CD8-positive, alpha-beta T cell (primary cell): ENCODE measurements at regions of chr6 and their contacts with region 1.

Region 1: DNA sequence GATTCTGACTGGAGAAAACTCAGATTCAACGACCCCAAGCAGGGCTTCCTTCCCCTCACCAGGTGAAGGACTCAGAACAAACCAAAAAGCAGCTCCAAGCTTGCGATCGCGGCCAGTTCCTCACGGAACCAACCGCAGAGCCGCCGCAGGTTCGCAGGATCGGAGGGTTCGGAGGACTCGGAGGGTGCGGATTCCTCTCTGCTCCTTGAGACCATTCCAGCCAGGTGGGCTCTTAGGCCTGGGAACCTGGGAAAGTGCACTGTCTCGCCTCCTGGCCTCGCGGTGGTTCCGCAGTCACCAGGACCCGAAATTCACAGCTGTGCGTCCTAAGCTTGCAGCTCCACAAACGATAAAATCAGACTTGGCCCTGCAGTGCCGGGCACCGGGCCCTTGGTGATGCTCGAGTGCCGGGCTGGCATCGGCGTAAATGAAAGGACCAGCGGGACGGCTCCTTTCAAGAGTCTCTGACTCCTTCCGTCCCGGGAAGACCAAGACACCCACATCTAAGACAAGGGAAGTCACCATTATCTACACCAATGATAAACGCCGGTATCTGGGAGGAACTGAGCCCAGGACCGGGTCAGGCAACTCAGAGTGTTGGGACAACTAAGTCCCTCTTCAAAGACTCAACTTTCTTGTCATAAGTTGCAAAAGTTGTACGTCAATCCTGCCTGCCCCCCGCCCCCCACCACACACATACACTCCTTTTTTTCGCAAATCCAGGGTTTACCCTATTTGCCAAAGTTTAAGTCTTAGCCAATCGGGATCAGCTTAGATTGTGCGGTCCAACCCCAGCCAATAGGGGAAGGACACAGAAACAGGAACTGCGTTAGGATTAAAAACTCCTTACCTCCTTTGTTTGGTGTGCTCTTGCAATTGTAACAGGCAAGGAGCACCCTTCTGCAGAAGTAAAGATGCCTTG is 69.8 kb upstream of the PRSS16 start:
- DNase-seq: peak; percentile 46 to 89 (median 72)
- ATAC-seq: peak; percentile 69
- H3K4me3 ChIP-seq: peak overlapping the region; percentile 95 to 100
- H3K4me3 Mint-ChIP-seq: peak overlapping the region; percentile 93
- H3K27ac ChIP-seq: peak overlapping the region; percentile 48 to 68
- H3K27ac Mint-ChIP-seq: peak overlapping the region; percentile 91
- H3K4me1 ChIP-seq: no peaks in the 10 kb centered on the region
- H3K4me1 Mint-ChIP-seq: peaks cover 17% of the 10 kb centered on the region
- H3K27me3 ChIP-seq: no peaks in the 10 kb centered on the region
- H3K27me3 Mint-ChIP-seq: peaks cover 3% of the 10 kb centered on the region
- CTCF ChIP-seq: peak; percentile 11

Region 2: GRCh38 chr6:27073441-27073840 is 104.3 kb before region 1 on chr6:
- CTCF ChIA-PET with region 1: no interaction called
- POLR2A ChIA-PET with region 1: no interaction called
- intact Hi-C with region 1: no loop called
- DNase-seq: no peak
- ATAC-seq: no peak
- H3K4me3 ChIP-seq: no peak overlapping the region
- H3K4me3 Mint-ChIP-seq: no peak overlapping the region
- H3K27ac ChIP-seq: no peak overlapping the region
- H3K27ac Mint-ChIP-seq: no peak overlapping the region
- H3K4me1 ChIP-seq: no peaks in the 10 kb centered on the region
- H3K4me1 Mint-ChIP-seq: peaks cover under 1% of the 10 kb centered on the region
- H3K27me3 ChIP-seq: peaks cover 0 to 2% of the 10 kb centered on the region in 2 experiments
- H3K27me3 Mint-ChIP-seq: peaks cover 24% of the 10 kb centered on the region
- CTCF ChIP-seq: no peak

Region 3: DNA sequence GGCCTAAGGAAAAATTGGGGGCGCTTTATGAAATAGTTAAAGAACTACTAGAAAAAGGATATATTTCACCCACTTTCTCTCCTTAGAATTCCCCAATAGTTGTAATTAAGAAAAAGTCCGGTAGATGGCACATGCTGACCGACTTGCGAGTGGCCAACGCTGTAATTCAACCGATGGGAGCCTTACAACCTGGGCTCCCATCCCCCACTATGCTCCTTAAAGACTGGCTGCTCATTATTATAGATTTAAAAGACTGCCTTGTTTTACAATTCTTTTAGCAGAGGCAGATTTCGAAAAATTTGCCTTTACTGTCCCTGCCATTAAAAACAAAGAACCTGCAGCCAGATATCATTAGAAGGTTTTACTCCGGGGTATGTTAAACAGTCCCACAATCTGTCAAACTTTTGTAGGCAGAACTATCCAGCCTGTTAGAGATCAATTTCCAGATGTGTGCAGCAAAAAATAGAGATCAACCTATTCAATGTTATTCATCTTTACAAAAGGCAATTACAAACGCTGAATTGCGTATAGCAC is 11.2 kb after region 1 on chr6:
- CTCF ChIA-PET with region 1: interaction called, 4 read pairs
- POLR2A ChIA-PET with region 1: interaction called, 7 read pairs
- intact Hi-C with region 1: loop called in 1 of 2 experiments (anchors 1 kb)
- DNase-seq: peak in 8 of 9 experiments; percentile 24 to 86 (median 50)
- ATAC-seq: peak; percentile 77
- H3K4me3 ChIP-seq: peak overlapping the region; percentile 58 to 62
- H3K4me3 Mint-ChIP-seq: peak overlapping the region; percentile 87
- H3K27ac ChIP-seq: peak overlapping the region in 1 of 2 experiments; percentile 33
- H3K27ac Mint-ChIP-seq: no peak overlapping the region
- H3K4me1 ChIP-seq: peaks cover 4% of the 10 kb centered on the region
- H3K4me1 Mint-ChIP-seq: peaks cover 10% of the 10 kb centered on the region
- H3K27me3 ChIP-seq: no peaks in the 10 kb centered on the region
- H3K27me3 Mint-ChIP-seq: no peaks in the 10 kb centered on the region
- CTCF ChIP-seq: peak; percentile 66

Region 4: DNA sequence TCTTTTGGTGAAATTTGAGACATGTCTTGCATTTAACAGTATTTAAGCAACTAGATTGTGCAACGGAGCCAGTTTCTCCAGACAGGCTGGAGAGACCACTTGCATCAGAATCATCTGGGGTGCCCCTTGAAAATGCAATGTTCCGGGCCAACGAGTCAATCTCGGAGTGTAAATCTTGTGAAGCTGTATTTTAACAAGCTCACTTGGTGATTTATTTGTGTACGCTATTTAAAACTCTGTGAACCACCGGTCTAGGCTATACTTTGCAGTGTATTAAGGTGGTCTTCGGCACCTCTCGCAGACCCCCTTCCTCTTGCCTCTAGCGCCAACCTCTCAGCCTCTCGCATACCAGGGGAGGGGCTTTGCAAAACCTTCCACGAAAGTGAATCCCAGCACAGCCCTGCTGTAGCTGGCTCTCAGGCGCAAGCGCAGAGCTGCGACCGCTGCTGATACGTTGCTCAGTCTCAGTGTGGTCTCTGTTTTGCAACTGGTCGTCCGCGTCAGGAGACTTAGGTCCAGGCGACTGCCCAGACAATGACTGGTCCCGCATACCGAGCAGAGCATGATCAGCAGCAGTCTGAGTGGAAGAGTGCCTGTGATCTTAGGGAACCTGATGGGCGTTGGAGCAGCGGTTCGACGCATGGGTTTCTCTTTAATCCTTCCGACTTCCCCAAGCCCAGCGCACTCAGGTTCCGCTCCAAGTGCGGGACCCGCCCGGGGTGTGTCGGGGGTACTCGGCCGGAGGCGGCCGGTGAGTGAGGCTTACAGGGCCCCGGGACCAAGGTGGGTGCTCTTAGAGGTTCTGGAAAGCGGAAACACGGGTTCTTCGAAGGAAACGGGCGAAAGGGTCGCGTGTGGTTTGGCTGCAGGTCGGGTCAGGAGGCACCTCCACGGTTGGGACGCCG is 210.8 kb after region 1 on chr6 and contains the start of gene ZNF391:
- CTCF ChIA-PET with region 1: no interaction called
- POLR2A ChIA-PET with region 1: no interaction called
- intact Hi-C with region 1: loop called (anchors 5 to 10 kb)
- DNase-seq: peak; percentile 41 to 86 (median 67)
- ATAC-seq: peak; percentile 90
- H3K4me3 ChIP-seq: peak within 1 kb of the TSS; percentile 66 to 72
- H3K4me3 Mint-ChIP-seq: peak within 1 kb of the TSS; percentile 98
- H3K27ac ChIP-seq: peak within 1 kb of the TSS; percentile 45 to 55
- H3K27ac Mint-ChIP-seq: peak within 1 kb of the TSS; percentile 94
- H3K4me1 ChIP-seq: peaks cover 9% of the 10 kb centered on the region
- H3K4me1 Mint-ChIP-seq: peaks cover 15% of the 10 kb centered on the region
- H3K27me3 ChIP-seq: no peaks in the 10 kb centered on the region
- H3K27me3 Mint-ChIP-seq: no peaks in the 10 kb centered on the region
- CTCF ChIP-seq: no peak
- total RNA-seq, gene ZNF391: 0.72 to 1.1 TPM

Region 5: GRCh38 chr6:27503436-27504030 is 325.8 kb after region 1 on chr6:
- CTCF ChIA-PET with region 1: no interaction called
- POLR2A ChIA-PET with region 1: no interaction called
- intact Hi-C with region 1: loop called (anchors 1 to 2 kb)
- DNase-seq: peak; percentile 58 to 90 (median 79)
- ATAC-seq: peak; percentile 62
- H3K4me3 ChIP-seq: peak overlapping the region; percentile 61 to 70
- H3K4me3 Mint-ChIP-seq: peak overlapping the region; percentile 94
- H3K27ac ChIP-seq: peak overlapping the region; percentile 34 to 46
- H3K27ac Mint-ChIP-seq: peak overlapping the region; percentile 90
- H3K4me1 ChIP-seq: peaks cover 11% of the 10 kb centered on the region
- H3K4me1 Mint-ChIP-seq: peaks cover 38% of the 10 kb centered on the region
- H3K27me3 ChIP-seq: peaks cover 0 to 7% of the 10 kb centered on the region in 2 experiments
- H3K27me3 Mint-ChIP-seq: peaks cover 4% of the 10 kb centered on the region
- CTCF ChIP-seq: no peak

Region 6: GRCh38 chr6:27795697-27796494 is 618.1 kb after region 1 on chr6:
- CTCF ChIA-PET with region 1: interaction called, 11 read pairs
- POLR2A ChIA-PET with region 1: no interaction called
- intact Hi-C with region 1: no loop called
- DNase-seq: peak in 5 of 9 experiments; percentile 35 to 88 (median 64)
- ATAC-seq: peak; percentile 75
- H3K4me3 ChIP-seq: no peak overlapping the region
- H3K4me3 Mint-ChIP-seq: no peak overlapping the region
- H3K27ac ChIP-seq: no peak overlapping the region
- H3K27ac Mint-ChIP-seq: peak overlapping the region; percentile 11
- H3K4me1 ChIP-seq: peaks cover 17% of the 10 kb centered on the region
- H3K4me1 Mint-ChIP-seq: peaks cover 22% of the 10 kb centered on the region
- H3K27me3 ChIP-seq: peaks cover 0 to 5% of the 10 kb centered on the region in 2 experiments
- H3K27me3 Mint-ChIP-seq: peaks cover 7% of the 10 kb centered on the region
- CTCF ChIP-seq: peak; percentile 80

Region 7: DNA sequence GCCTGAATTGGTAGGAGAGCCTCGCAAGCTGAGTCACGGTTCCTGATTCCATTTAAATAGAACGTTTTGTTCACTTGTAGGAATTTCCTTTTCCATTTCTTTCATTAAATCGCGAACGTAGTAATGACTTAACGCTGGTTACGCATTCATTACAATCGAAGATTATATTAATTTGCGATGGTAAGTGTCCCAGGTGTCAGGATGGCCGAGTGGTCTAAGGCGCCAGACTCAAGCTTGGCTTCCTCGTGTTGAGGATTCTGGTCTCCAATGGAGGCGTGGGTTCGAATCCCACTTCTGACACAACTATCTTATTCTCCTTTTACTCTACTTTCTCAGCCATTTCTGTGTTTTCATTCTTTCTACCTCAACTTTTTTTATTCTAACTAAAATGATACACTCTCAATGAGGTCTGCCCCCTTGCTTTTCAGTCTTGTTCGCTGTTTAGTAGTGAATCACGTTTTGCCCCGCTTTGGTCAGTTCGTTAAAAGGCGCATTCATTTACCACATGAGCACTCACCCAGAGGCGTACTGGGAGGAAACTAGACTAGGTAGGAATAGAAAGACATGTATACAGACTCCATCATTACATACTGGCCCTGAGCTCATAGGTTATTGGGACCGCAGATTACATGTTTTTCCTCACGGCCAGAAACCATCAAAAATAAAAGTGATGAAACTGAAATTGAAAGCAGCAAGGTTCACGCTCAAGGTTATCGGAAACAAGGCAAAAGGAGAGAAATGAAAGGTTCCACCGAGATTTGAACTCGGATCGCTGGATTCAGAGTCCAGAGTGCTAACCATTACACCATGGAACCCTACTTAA is 1763.3 kb after region 1 on chr6:
- CTCF ChIA-PET with region 1: no interaction called
- POLR2A ChIA-PET with region 1: no interaction called
- intact Hi-C with region 1: loop called in 1 of 2 experiments (anchors 5 kb)
- DNase-seq: peak in 8 of 9 experiments; percentile 58 to 92 (median 70)
- ATAC-seq: peak; percentile 70
- H3K4me3 ChIP-seq: peak overlapping the region; percentile 66 to 81
- H3K4me3 Mint-ChIP-seq: peak overlapping the region; percentile 91
- H3K27ac ChIP-seq: peak overlapping the region; percentile 70 to 79
- H3K27ac Mint-ChIP-seq: peak overlapping the region; percentile 96
- H3K4me1 ChIP-seq: peaks cover 40% of the 10 kb centered on the region
- H3K4me1 Mint-ChIP-seq: peaks cover 46% of the 10 kb centered on the region
- H3K27me3 ChIP-seq: no peaks in the 10 kb centered on the region
- H3K27me3 Mint-ChIP-seq: no peaks in the 10 kb centered on the region
- CTCF ChIP-seq: no peak